ENCODE measurements at regions of chr10 and their contacts with region 1.

Region 1: DNA sequence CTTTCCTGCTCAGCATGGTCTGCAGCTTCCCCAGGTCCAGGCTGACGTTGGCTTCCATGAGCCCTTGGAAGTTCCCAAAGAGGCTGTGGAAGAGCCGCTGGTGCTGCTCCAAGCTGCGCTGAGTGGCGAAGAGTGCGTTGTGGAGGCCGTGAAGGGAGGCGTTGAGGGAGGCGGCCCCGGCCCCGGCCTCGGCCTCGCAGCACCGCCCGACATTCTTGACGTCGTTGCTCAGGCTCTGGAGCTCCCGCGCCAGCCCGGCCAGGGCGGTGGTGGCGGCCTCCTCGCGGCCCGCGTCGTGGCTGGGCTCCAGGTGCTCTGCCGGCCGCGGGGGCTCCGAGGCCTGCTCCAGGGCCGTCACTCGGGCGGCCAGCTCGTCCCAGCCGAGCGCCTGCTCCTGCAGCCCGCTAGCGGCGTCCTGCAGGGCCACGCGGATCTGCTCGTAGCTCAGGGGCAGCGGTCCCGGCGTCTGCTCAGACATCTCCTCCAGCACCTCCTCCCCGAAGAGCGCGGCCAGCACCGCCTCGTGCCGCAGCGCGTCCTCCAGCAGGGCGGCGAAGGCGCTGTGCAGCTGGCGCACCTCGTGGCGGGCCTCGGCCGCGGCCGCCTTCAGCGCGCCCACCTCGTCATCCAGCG is 14.9 kb downstream of the MMRN2 start:
- DNase-seq: peak; percentile 73

Region 2: GRCh38 chr10:86857128-86857721 is 85.3 kb before region 1 on chr10:
- intact Hi-C with region 1: no loop called
- DNase-seq: no peak

Region 3: GRCh38 chr10:86960003-86960862 is 17.7 kb after region 1 on chr10:
- intact Hi-C with region 1: loop called (anchors 2 kb)
- DNase-seq: no peak

Measured in cardiac septum (tissue), 1 donor.